CD8-positive, alpha-beta memory T cell (primary cell): ENCODE measurements at regions of chr6 and their contacts with region 1.

Region 1: DNA sequence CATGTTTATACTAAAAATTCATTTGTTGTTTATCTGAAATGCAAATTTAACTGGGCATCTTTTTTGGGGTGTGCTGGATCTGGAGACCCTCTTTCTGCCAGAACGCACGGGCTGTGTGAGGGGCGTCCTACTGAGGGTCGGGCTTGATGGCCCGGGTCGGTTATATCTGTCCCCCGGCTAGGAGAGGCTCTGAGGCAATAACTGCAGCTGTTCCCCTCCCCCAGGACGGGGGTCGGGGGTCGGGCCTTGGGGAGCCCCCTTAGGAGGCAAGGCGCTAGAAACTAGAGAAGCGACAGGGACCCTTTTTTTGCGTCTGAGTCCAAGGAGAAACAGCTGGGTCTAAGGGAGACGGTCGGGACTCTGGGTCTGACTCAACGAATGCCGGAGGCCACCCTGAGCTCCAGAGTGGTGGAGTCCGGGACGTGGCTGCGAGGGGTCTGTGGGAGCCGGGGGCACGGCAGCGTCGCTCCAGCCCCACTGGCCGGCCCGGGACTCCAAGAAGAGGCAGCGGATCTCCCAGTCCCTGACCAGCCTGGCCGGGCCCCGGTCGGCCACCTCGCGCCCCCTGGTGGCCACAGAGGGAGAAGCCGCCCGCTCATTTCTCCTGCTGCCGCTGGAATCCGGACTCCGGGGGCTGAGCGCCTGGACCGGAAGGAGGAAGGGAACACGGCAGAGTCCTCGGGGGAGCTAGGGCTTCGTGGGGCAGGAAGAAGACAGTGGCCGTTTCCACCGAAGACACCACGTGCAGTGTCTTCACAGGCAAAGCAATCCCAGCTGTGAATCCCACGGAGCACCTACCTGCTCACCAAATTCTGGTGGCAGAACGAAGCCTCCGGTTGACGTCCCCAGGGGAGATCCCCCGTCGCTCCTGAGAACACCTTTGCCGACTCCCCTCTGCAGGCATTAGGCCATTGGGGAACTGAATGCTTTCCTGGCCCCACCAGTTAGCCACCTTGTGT is 24.0 kb upstream of the SCML4 start:
- DNase-seq: peak; percentile 71 to 86 (median 79)
- H3K4me3 ChIP-seq: peak overlapping the region; percentile 42
- H3K4me3 Mint-ChIP-seq: peak overlapping the region; percentile 71 to 92 (median 79)
- H3K27ac ChIP-seq: no peak overlapping the region
- H3K27ac Mint-ChIP-seq: peak overlapping the region; percentile 51 to 91 (median 74)
- H3K4me1 ChIP-seq: peaks cover 16% of the 10 kb centered on the region
- H3K4me1 Mint-ChIP-seq: peaks cover 22 to 27% (median 27%) of the 10 kb centered on the region in 3 donors
- H3K27me3 ChIP-seq: no peaks in the 10 kb centered on the region
- H3K27me3 Mint-ChIP-seq: peaks cover 0 to 2% of the 10 kb centered on the region in 2 donors

Region 2: GRCh38 chr6:107443608-107444267 is 404.4 kb before region 1 on chr6:
- CTCF ChIA-PET with region 1: no interaction called
- POLR2A ChIA-PET with region 1: no interaction called
- DNase-seq: no peak
- H3K4me3 ChIP-seq: no peak overlapping the region
- H3K4me3 Mint-ChIP-seq: no peak overlapping the region
- H3K27ac ChIP-seq: no peak overlapping the region
- H3K27ac Mint-ChIP-seq: no peak overlapping the region
- H3K4me1 ChIP-seq: no peaks in the 10 kb centered on the region
- H3K4me1 Mint-ChIP-seq: peaks cover 23 to 33% (median 27%) of the 10 kb centered on the region in 3 donors
- H3K27me3 ChIP-seq: no peaks in the 10 kb centered on the region
- H3K27me3 Mint-ChIP-seq: no peaks in the 10 kb centered on the region

Region 3: GRCh38 chr6:107691062-107691751 is 156.9 kb before region 1 on chr6:
- CTCF ChIA-PET with region 1: interaction called, 11 read pairs
- POLR2A ChIA-PET with region 1: interaction called, 6 read pairs
- DNase-seq: no peak
- H3K4me3 ChIP-seq: no peak overlapping the region
- H3K4me3 Mint-ChIP-seq: no peak overlapping the region
- H3K27ac ChIP-seq: no peak overlapping the region
- H3K27ac Mint-ChIP-seq: no peak overlapping the region
- H3K4me1 ChIP-seq: no peaks in the 10 kb centered on the region
- H3K4me1 Mint-ChIP-seq: peaks cover 0 to 1% (median 0%) of the 10 kb centered on the region in 3 donors
- H3K27me3 ChIP-seq: no peaks in the 10 kb centered on the region
- H3K27me3 Mint-ChIP-seq: peaks cover 0 to 4% of the 10 kb centered on the region in 2 donors

Region 4: GRCh38 chr6:107731422-107732319 is 116.5 kb before region 1 on chr6:
- CTCF ChIA-PET with region 1: interaction called, 129 read pairs
- POLR2A ChIA-PET with region 1: interaction called, 14 read pairs
- DNase-seq: peak in 1 of 5 donors; percentile 53
- H3K4me3 ChIP-seq: peak overlapping the region; percentile 87
- H3K4me3 Mint-ChIP-seq: peak overlapping the region; percentile 92 to 98 (median 95)
- H3K27ac ChIP-seq: peak overlapping the region; percentile 20
- H3K27ac Mint-ChIP-seq: peak overlapping the region; percentile 90 to 96 (median 92)
- H3K4me1 ChIP-seq: peaks cover 81% of the 10 kb centered on the region
- H3K4me1 Mint-ChIP-seq: peaks cover 87 to 100% (median 96%) of the 10 kb centered on the region in 3 donors
- H3K27me3 ChIP-seq: no peaks in the 10 kb centered on the region
- H3K27me3 Mint-ChIP-seq: peaks cover 0 to 3% of the 10 kb centered on the region in 2 donors

Region 5: GRCh38 chr6:107786709-107787588 is 61.2 kb before region 1 on chr6:
- CTCF ChIA-PET with region 1: interaction called, 37 read pairs
- POLR2A ChIA-PET with region 1: interaction called, 5 read pairs
- DNase-seq: peak; percentile 16 to 72 (median 58)
- H3K4me3 ChIP-seq: peak overlapping the region; percentile 33
- H3K4me3 Mint-ChIP-seq: peak overlapping the region; percentile 61 to 91 (median 84)
- H3K27ac ChIP-seq: peak overlapping the region; percentile 9
- H3K27ac Mint-ChIP-seq: peak overlapping the region; percentile 88 to 96 (median 92)
- H3K4me1 ChIP-seq: peaks cover 85% of the 10 kb centered on the region
- H3K4me1 Mint-ChIP-seq: peaks cover 80 to 90% (median 88%) of the 10 kb centered on the region in 3 donors
- H3K27me3 ChIP-seq: no peaks in the 10 kb centered on the region
- H3K27me3 Mint-ChIP-seq: peaks cover 0 to 2% of the 10 kb centered on the region in 2 donors

Region 6: GRCh38 chr6:107820338-107821261 is 27.5 kb before region 1 on chr6:
- CTCF ChIA-PET with region 1: interaction called, 65 read pairs
- POLR2A ChIA-PET with region 1: interaction called, 5 read pairs
- DNase-seq: peak in 4 of 5 donors; percentile 12 to 62 (median 48)
- H3K4me3 ChIP-seq: peak overlapping the region; percentile 68
- H3K4me3 Mint-ChIP-seq: peak overlapping the region; percentile 93 to 97 (median 97)
- H3K27ac ChIP-seq: peak overlapping the region; percentile 92
- H3K27ac Mint-ChIP-seq: peak overlapping the region; percentile 95 to 100 (median 100)
- H3K4me1 ChIP-seq: peaks cover 71% of the 10 kb centered on the region
- H3K4me1 Mint-ChIP-seq: peaks cover 75 to 89% (median 86%) of the 10 kb centered on the region in 3 donors
- H3K27me3 ChIP-seq: no peaks in the 10 kb centered on the region
- H3K27me3 Mint-ChIP-seq: no peaks in the 10 kb centered on the region